CD14-positive monocyte (primary cell): ENCODE measurements at regions of chr16 and their contacts with region 1.

Region 1: GRCh38 chr16:2520092-2520783 is at the start of gene AMDHD2:
- DNase-seq: peak; percentile 87 to 95 (median 94)
- H3K4me3 ChIP-seq: peak within 1 kb of the TSS; percentile 30 to 100 (median 62)
- H3K4me3 Mint-ChIP-seq: peak within 1 kb of the TSS; percentile 90 to 92
- H3K27ac ChIP-seq: peak within 1 kb of the TSS; percentile 96
- H3K27ac Mint-ChIP-seq: peak within 1 kb of the TSS; percentile 96 to 100 (median 99)
- H3K4me1 ChIP-seq: peaks cover 56 to 57% of the 10 kb centered on the region in 2 donors
- H3K4me1 Mint-ChIP-seq: peaks cover 62% of the 10 kb centered on the region
- H3K27me3 ChIP-seq: no peaks in the 10 kb centered on the region
- H3K27me3 Mint-ChIP-seq: peaks cover 0 to 1% (median 0%) of the 10 kb centered on the region in 3 donors
- CTCF ChIP-seq: no peak
- polyA plus RNA-seq, gene AMDHD2: 6.9 to 57.8 (median 8.4) TPM

Region 2: GRCh38 chr16:2531767-2532493 is 11.7 kb after region 1 on chr16:
- intact Hi-C with region 1: loop called in 1 of 2 experiments (anchors 1 kb)
- DNase-seq: peak; percentile 97 to 99 (median 98)
- H3K4me3 ChIP-seq: peak overlapping the region; percentile 48 to 92 (median 88)
- H3K4me3 Mint-ChIP-seq: peak overlapping the region; percentile 91 to 97
- H3K27ac ChIP-seq: peak overlapping the region; percentile 99 to 100
- H3K27ac Mint-ChIP-seq: peak overlapping the region; percentile 98 to 100 (median 98)
- H3K4me1 ChIP-seq: peaks cover 51 to 66% of the 10 kb centered on the region in 2 donors
- H3K4me1 Mint-ChIP-seq: peaks cover 47% of the 10 kb centered on the region
- H3K27me3 ChIP-seq: no peaks in the 10 kb centered on the region
- H3K27me3 Mint-ChIP-seq: peaks cover 0 to 5% (median 0%) of the 10 kb centered on the region in 3 donors
- CTCF ChIP-seq: no peak

Region 3: DNA sequence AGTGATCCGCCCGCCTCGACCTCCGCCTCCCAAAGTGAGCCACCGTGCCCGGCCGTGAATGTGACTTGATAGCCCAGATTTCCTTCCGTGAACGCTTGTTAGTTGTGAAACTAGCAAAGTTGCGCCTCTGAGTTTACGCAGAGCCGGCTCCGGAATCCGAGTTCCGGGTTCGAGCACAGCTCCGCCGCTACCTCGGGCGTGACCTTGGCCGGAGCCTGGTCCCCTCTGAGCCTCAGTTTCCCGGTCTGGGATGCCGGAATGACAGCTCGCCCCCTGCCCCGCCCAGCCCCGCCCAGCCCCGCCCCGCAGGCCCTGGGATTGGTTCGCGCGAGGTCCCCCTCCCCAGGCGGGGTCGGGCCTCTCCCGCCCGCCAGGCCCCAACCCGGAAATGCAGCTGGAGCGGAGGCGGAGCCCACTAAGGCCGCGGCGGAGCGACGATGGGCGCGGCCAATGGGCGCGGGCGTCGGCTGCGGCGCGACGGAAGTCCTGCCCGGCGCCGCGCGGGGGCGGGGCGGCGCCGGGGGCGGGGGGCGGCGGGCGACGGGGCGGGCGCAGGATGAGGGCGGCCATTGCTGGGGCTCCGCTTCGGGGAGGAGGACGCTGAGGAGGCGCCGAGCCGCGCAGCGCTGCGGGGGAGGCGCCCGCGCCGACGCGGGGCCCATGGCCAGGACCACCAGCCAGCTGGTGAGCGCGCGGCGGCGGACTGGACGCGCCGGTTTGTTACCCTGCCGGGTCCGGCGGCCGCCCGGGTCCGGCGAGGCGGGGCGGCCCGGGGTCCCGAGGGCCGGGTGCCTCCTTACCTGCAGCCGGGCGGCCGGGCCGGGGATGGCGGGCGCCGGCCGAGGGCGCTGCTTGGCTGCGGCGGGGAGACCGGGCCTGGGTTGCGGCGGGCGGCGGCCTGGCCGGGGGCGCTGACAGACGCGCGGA is 17.5 kb after region 1 on chr16 and contains the start of gene PDPK1:
- intact Hi-C with region 1: loop called (anchors 1 to 2 kb)
- DNase-seq: peak; percentile 92 to 94 (median 93)
- H3K4me3 ChIP-seq: peak within 1 kb of the TSS; percentile 53 to 73 (median 69)
- H3K4me3 Mint-ChIP-seq: peak within 1 kb of the TSS; percentile 81 to 92
- H3K27ac ChIP-seq: peak within 1 kb of the TSS; percentile 88 to 96
- H3K27ac Mint-ChIP-seq: peak within 1 kb of the TSS; percentile 90 to 98 (median 98)
- H3K4me1 ChIP-seq: peaks cover 72 to 75% of the 10 kb centered on the region in 2 donors
- H3K4me1 Mint-ChIP-seq: peaks cover 69% of the 10 kb centered on the region
- H3K27me3 ChIP-seq: no peaks in the 10 kb centered on the region
- H3K27me3 Mint-ChIP-seq: peaks cover 0 to 4% (median 3%) of the 10 kb centered on the region in 3 donors
- CTCF ChIP-seq: no peak
- polyA plus RNA-seq, gene PDPK1: 35.6 to 45.9 (median 38.6) TPM